Dorsolateral prefrontal cortex (tissue), 120 donors: ENCODE measurements at regions of chr19 and their contacts with region 1.

Region 1: DNA sequence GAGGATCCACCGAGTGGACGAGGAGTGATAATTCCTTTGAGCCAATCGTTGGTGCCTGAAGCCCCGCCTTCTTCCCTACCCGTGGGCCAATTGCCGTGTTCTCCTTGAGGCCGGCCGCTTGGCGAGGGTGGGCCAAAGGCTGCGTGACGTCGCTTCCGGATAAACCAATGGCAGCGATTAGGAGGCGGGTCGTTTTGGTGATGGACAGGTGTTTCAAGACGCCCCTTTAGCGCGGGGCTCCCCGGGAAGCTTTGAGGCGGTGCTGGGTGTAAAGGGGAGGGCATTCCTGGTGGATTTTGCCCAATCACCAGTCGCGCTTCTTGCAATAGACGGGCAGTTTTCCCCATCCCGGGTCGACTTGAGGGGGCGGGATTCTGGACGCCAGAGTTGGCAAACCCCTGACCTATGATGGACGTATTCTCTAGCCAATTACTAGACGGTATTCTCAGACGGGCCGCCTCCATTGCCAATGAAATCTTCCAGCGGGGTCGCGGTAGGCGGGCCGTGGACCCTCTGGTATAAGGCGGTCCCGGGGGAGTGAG is 310 bp upstream of the PRMT1 start:
- DNase-seq: peak; percentile 99 to 100 (median 100)
- H3K4me3 ChIP-seq: peak overlapping the region; percentile 64 to 100 (median 97)
- H3K27ac ChIP-seq: peak overlapping the region; percentile 58 to 98 (median 95)
- H3K27me3 ChIP-seq: no peaks in the 10 kb centered on the region
- CTCF ChIP-seq: peak in 6 of 56 donors; percentile 2 to 39 (median 10)

Region 2: DNA sequence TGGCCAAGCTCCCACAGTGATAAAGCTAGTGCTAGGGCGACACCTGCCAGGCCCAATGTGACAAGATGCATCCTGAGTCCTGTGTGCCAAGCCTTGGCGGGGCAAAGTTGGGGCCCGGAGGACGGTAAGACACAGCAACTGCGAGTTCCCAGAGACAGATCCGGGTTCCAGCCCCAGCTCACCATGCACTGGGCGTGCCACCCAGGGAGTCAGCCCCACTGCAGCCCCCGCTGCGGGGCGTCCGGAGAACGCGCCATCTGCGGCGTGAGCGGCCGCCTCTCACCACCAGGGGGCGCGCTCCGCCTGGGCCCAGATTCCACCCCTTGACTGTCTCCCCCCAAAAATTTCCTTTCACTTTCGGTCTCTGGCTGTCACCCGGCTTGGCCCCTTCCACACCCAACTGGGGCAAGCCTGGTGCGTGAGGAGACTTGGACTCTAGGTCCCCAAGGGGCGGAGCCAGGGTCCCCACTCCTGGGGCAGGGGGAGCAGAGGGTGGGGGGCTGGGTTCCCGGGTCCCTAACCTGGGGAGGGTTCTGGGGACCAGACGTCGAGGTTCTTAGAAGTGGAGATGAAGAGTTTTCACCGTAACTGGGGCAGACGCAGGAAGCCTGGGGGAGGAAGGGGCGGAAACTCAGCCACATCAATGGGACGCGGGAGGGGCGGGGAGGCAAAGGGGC is 202.8 kb before region 1 on chr19 and contains the start of gene FLT3LG:
- intact Hi-C with region 1: loop called in 1 of 2 experiments (anchors 5 kb)
- DNase-seq: peak in 8 of 10 donors; percentile 14 to 77 (median 46)
- H3K4me3 ChIP-seq: peak within 1 kb of the TSS; percentile 49 to 89 (median 70)
- H3K27ac ChIP-seq: peak within 1 kb of the TSS in 51 of 59 donors; percentile 15 to 90 (median 70)
- H3K27me3 ChIP-seq: no peaks in the 10 kb centered on the region
- CTCF ChIP-seq: peak; percentile 90 to 100 (median 98)
- total RNA-seq, gene FLT3LG: 1.7 to 11.9 (median 4.6) TPM

Region 3: GRCh38 chr19:49497047-49497788 is 179.5 kb before region 1 on chr19:
- intact Hi-C with region 1: loop called in 1 of 2 experiments (anchors 5 kb)
- DNase-seq: peak in 2 of 10 donors; percentile 47 to 51
- H3K4me3 ChIP-seq: peak overlapping the region; percentile 55 to 100 (median 92)
- H3K27ac ChIP-seq: peak overlapping the region in 56 of 59 donors; percentile 83 to 99 (median 96)
- H3K27me3 ChIP-seq: no peaks in the 10 kb centered on the region
- CTCF ChIP-seq: no peak

Region 4: GRCh38 chr19:49590071-49590970 is 86.4 kb before region 1 on chr19:
- intact Hi-C with region 1: loop called in 1 of 2 experiments (anchors 1 kb)
- DNase-seq: peak; percentile 70 to 95 (median 90)
- H3K4me3 ChIP-seq: peak overlapping the region; percentile 57 to 99 (median 79)
- H3K27ac ChIP-seq: peak overlapping the region; percentile 65 to 99 (median 96)
- H3K27me3 ChIP-seq: no peaks in the 10 kb centered on the region
- CTCF ChIP-seq: peak in 1 of 56 donors; percentile 8

Region 5: DNA sequence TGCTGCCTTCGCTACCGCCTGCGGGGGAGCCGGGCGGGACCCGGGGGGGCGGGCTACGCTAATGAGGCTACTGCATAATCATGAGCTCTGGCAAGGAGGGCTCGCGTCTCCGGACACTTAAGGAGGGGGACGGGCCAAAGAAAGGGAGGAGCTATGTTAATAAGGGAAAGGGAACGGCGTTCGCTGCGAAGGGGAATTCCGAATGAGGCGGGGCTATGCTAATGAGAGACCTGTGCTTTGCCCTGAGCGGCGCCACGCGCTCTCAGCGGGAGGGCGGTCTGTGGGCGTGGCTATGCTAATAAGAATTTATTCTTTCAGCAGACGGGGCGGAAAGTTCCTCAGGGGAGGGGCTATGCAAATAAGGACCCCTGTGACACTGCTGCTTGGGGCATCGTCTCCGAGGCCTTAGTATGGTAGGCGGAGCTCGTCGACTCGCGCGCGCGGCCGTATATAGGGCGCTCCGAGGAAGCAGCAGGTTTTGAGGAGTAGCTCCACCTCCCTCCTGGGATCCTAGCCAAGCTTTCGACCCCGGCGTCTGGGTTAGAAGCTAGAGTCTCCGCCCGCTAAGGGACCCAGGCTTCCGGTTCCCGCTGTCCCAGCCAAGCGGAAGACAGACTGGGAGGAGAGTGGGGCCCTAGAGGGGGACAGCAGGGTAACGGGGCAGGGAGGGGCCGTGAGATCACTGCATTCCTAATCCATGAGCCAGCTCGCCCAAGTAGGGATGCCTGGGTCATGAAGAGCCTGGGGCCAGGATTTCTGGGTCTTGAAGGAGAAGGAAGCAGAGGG is 36.5 kb before region 1 on chr19 and contains the start of gene RRAS:
- intact Hi-C with region 1: loop called in 1 of 2 experiments (anchors 5 kb)
- DNase-seq: peak; percentile 97 to 100 (median 100)
- H3K4me3 ChIP-seq: peak within 1 kb of the TSS; percentile 55 to 100 (median 97)
- H3K27ac ChIP-seq: peak within 1 kb of the TSS; percentile 60 to 99 (median 94)
- H3K27me3 ChIP-seq: no peaks in the 10 kb centered on the region
- CTCF ChIP-seq: peak in 16 of 56 donors; percentile 5 to 32 (median 14)
- total RNA-seq, gene RRAS: 5.4 to 32.8 (median 12.9) TPM

Region 6: DNA sequence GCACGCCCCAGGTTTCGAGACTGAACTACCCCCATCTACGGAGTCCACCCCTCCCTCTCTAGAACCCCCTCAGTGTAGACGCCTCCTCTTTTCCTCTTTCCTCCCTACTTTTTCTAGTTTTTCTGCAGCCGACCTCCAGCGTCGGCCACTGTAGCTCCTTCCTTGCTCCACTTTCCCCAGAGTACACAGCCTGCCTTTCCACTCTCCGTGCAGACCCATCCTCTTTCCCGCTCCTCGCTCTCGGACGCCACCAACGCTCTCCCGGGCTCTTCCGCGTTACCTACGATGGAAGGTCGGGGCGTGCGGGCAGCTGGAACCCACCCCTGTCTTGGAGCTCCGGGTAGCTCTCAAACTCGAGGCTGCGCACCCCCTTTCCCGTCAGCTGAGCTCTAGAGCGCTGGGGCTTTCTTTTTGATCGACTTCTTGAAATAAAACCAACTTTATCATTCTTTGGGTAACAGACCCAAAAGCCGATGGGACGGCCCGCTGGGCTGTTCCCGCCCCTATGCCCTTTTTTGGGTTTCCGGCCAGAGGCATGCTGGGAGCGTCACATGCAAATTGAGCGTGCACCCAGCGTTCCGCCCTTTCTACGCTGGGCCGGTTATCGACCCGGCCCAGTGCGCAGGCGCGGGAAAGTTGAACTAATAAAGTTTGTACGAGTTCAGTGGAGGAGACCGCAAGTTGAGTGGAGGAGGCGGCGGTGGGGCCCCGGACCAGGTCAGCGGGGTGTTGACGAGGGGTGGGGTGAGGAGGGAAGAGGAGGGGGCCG is 11.2 kb before region 1 on chr19 and contains the starts of genes BCL2L12 and IRF3:
- intact Hi-C with region 1: loop called in 1 of 2 experiments (anchors 1 kb)
- DNase-seq: peak; percentile 93 to 98 (median 96)
- H3K4me3 ChIP-seq: peak within 1 kb of the TSS; percentile 62 to 99 (median 85)
- H3K27ac ChIP-seq: peak within 1 kb of the TSS; percentile 4 to 94 (median 86)
- H3K27me3 ChIP-seq: no peaks in the 10 kb centered on the region
- CTCF ChIP-seq: peak in 24 of 56 donors; percentile 6 to 44 (median 24)
- total RNA-seq, gene BCL2L12: 0.87 to 9.6 (median 3.6) TPM
- total RNA-seq, gene IRF3: 44.4 to 102 (median 65.0) TPM

Region 7: GRCh38 chr19:49701271-49701786 is 24.6 kb after region 1 on chr19:
- intact Hi-C with region 1: no loop called
- DNase-seq: no peak
- H3K4me3 ChIP-seq: no peak overlapping the region
- H3K27ac ChIP-seq: no peak overlapping the region
- H3K27me3 ChIP-seq: no peaks in the 10 kb centered on the region
- CTCF ChIP-seq: no peak

Region 8: DNA sequence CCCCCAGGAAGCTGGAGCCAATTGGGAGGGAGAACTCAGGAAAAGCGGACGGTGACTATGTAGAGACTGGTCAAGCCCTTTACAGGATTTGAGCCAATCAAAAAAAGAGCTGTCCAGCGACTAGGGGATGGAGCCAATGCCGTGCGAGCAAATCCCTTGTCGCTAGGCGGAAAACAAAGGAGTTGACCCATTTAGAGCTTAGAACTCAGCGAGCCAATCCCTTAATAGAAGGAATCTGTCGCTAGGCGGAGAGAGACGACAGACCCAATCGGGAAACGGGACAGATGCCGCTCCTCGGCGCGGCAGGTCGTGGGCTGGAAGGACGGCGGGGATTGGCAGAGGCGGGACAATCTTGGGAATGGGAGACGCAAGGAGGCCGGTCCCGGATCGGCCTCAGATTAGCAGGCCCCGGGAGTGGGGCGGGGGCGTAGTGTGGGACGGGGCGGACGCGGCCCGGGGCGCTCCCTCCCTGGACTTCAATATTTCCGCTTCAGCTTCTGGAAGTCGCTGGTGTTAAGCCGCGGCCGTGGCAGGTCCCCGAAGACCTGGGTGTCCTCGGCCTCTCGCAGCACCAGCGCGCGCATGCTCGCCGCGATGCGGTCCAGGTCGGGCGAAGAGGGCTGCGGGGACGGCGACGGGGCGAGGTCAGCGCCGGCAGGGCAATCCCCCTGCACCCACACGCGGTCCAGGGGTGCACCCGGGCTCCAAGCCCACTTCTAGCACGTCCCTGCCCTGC is 192.8 kb after region 1 on chr19:
- intact Hi-C with region 1: loop called in 1 of 2 experiments (anchors 5 kb)
- DNase-seq: peak; percentile 85 to 99 (median 98)
- H3K4me3 ChIP-seq: peak overlapping the region; percentile 52 to 94 (median 70)
- H3K27ac ChIP-seq: peak overlapping the region; percentile 86 to 99 (median 96)
- H3K27me3 ChIP-seq: no peaks in the 10 kb centered on the region
- CTCF ChIP-seq: peak in 45 of 56 donors; percentile 10 to 68 (median 39)